PC-3 (cell line): ENCODE measurements at regions of chr12 and their contacts with region 1.

Region 1: DNA sequence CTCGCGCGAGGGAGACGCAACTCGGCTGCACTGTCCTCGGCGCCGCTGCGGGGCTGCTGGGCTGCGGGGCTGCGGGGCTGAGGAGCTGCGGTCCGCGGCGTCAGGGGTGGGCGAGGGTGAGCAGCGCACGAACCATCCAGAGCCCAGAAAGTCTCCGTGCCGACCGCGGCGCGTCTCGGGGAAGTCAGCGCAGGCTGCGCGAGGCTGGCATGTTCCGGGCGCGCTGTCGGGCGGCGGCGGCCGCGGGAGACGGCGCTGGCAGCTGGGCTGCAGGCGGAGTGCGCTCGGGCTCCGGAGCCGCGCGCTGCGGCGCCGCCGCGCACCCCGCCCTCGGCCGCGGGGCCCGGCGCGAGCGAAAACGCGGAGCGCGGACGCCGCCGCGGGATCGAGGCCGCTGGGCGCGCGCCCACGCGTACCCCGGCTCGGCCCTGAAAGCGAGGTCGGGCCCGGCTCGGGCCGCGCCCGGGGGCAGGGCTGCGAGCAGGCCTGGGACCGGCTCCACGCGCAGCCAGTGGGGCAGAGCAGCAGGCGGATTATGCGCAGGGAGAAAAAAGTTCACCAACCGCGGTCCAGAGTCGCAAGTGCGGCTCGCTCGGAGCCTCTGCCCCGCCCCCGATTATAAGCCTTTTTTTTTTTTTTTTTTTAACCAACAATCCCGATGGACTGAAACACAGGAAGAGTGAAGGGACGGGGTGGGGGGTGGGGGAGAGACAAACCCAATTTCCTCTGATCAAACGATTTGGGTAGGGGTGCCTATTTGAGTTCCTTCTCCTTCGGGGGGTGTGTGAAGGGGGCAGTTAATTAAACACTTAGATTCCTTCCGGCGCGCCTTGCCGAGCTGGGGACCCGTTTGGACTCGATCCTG is at the start of gene PRICKLE1:
- DNase-seq: peak; percentile 57
- ATAC-seq: peak; percentile 45
- H3K4me3 ChIP-seq: peak within 1 kb of the TSS; percentile 97
- H3K27ac ChIP-seq: 0 out of 2 replicates have a peak within 1 kb of the TSS, but pooled peaks have one; percentile 5
- H3K4me1 ChIP-seq: peaks cover 45% of the 10 kb centered on the region
- H3K27me3 ChIP-seq: no peaks in the 10 kb centered on the region
- CTCF ChIP-seq: no peak
- total RNA-seq, gene PRICKLE1: 16.2 and 17.2 TPM in 2 replicates

Region 2: DNA sequence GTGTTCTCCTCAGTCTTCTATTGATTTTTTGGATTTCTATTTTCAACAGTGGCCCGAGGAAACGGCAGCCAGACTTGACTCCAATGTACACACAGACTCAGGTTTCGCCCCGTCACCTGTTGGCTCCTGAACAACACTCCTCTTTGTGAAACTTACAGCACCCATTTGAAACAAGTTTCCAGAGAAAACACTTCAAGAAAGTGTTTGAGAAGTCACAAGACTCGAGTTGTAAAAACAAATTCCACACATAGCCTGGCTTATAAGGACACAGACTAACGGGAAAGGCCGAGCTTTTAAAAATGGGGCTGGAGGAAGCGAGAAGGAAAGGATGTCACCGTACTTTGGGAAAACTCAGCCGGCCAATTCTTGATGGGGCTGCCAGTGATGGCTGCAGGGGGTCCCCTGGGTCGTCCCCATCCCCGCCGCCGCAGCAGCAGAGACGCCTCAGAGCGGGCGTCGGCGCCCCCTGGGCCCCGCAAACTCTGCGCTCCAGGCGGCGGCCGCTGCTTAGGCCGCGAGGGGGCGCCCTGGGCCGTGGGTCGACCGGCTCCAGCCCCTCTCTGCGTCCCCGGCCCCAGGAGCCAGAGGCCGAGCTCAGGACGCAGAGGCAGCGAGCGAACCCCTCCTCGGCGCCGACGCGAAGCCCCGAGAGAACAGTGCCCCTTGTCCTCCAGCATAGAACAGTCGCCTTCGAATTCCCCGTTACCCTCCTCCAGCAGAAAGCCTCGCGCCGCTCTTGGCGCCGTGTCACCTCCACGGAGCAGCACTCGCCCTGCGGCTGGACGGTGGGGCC is 107.1 kb before region 1 on chr12:
- CTCF ChIA-PET with region 1: no interaction called
- POLR2A ChIA-PET with region 1: no interaction called
- intact Hi-C with region 1: loop called (anchors 5 kb)
- DNase-seq: peak; percentile 73
- ATAC-seq: peak; percentile 82
- H3K4me3 ChIP-seq: peak overlapping the region; percentile 78
- H3K27ac ChIP-seq: peak overlapping the region; percentile 54
- H3K4me1 ChIP-seq: peaks cover 18% of the 10 kb centered on the region; the same call in 1 of the 2 replicates
- H3K27me3 ChIP-seq: no peaks in the 10 kb centered on the region
- CTCF ChIP-seq: peak; percentile 94

Region 3: DNA sequence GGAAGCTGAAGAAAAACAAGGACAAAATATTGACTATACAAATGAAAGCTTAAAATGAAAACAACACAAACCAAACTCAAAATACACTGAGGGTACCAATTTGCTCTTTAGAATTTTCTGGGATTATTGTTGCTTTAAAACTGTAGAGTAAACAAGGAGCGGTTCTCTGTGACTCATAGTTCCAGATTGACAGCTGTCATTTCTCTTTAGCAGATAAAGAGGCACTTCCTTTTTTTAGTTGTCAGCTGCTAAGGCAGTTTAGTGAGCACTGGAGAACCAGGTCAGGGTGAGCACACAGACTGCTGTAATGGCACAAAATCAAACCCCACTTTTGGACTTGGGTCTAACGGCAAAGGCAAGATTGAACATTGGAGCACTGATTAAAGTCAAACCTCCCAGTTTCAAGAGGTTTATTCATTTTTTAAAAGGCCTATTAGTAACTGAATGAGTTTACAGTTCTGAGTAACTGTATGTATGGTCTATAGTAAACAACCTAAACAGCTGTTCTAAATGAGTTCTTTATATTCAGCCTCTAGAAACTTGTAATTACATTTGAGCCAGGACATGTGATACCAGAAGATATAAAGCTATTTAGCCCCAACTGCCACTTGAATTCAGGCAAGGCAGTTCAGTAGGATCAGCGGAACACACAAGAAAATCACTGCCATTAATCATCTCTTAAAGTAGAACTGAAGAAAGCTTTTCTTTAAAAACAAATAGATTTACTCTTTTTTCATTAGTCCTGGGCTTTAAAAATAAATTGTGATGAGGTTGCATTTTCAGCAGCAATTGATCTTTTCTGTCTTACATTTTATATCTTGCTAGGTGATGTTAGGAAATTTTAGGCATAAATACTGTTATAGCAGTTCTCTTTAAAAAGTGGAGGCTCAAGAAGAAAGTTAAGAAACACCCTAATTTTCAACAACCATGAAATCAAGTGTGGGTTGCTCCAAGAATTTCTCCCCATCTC is 71.6 kb after region 1 on chr12:
- CTCF ChIA-PET with region 1: no interaction called
- POLR2A ChIA-PET with region 1: no interaction called
- intact Hi-C with region 1: loop called (anchors 5 kb)
- DNase-seq: peak; percentile 24
- ATAC-seq: peak; percentile 66
- H3K4me3 ChIP-seq: no peak overlapping the region
- H3K27ac ChIP-seq: no peak overlapping the region
- H3K4me1 ChIP-seq: peaks cover 8% of the 10 kb centered on the region
- H3K27me3 ChIP-seq: no peaks in the 10 kb centered on the region
- CTCF ChIP-seq: no peak

Region 4: DNA sequence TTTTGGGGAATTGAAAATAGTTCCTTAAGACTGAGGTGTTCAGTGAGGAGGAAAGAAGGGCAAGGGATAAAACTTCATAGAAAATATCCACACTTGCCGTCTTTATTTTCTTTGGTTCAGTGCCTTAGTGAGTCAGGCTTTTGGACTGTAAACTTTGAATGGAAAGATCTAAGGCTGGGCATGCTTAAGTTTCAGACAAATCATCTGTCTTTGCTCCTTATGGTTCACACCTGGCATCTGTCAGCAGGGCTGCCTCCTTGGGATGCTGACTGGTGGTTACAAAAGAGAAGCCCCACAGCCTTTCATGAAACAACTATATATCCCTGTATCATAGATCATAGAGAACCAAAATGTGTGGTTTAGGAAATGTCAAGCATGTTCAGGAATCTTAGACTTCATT is 136.1 kb after region 1 on chr12:
- CTCF ChIA-PET with region 1: no interaction called
- POLR2A ChIA-PET with region 1: no interaction called
- intact Hi-C with region 1: loop called (anchors 5 kb)
- DNase-seq: peak; percentile 80
- ATAC-seq: peak; percentile 66
- H3K4me3 ChIP-seq: no peak overlapping the region
- H3K27ac ChIP-seq: no peak overlapping the region
- H3K4me1 ChIP-seq: peaks cover 41% of the 10 kb centered on the region
- H3K27me3 ChIP-seq: no peaks in the 10 kb centered on the region
- CTCF ChIP-seq: no peak

Region 5: GRCh38 chr12:42887657-42888056 is 298.0 kb after region 1 on chr12:
- CTCF ChIA-PET with region 1: no interaction called
- POLR2A ChIA-PET with region 1: no interaction called
- intact Hi-C with region 1: loop called (anchors 5 kb)
- DNase-seq: peak; percentile 68
- ATAC-seq: peak; percentile 90
- H3K4me3 ChIP-seq: no peak overlapping the region
- H3K27ac ChIP-seq: peak overlapping the region; percentile 57
- H3K4me1 ChIP-seq: peaks cover 15% of the 10 kb centered on the region
- H3K27me3 ChIP-seq: no peaks in the 10 kb centered on the region
- CTCF ChIP-seq: no peak

Region 6: DNA sequence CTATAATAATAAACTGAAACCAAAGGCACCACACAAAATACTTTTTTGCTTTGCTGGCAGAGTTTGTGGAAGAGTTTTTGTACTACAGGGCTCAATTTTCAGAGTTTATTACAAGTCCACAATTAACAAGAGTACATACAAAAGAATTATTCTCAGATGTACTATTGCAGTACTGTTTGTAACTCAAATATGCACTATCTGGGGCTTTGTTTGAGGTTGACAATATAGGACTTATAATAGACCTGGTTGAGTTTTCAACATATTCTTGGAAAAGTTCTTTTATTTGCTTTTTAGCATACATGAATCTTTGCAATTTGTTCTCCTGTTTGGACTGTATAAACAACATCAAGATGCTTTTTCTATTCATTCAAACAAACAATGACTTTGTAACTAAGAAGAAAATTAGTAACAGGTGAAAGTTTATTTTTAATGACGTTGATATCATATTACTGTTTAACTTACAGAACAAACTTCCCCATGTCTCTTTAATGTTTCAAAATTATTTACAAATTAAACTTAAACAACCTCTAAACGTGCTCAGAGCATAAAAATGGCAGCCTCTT is 407.3 kb after region 1 on chr12:
- CTCF ChIA-PET with region 1: no interaction called
- POLR2A ChIA-PET with region 1: no interaction called
- intact Hi-C with region 1: loop called (anchors 1 kb)
- DNase-seq: peak; percentile 31
- ATAC-seq: peak; percentile 73
- H3K4me3 ChIP-seq: no peak overlapping the region
- H3K27ac ChIP-seq: peak overlapping the region; percentile 37
- H3K4me1 ChIP-seq: peaks cover 17% of the 10 kb centered on the region
- H3K27me3 ChIP-seq: no peaks in the 10 kb centered on the region
- CTCF ChIP-seq: no peak

Region 7: DNA sequence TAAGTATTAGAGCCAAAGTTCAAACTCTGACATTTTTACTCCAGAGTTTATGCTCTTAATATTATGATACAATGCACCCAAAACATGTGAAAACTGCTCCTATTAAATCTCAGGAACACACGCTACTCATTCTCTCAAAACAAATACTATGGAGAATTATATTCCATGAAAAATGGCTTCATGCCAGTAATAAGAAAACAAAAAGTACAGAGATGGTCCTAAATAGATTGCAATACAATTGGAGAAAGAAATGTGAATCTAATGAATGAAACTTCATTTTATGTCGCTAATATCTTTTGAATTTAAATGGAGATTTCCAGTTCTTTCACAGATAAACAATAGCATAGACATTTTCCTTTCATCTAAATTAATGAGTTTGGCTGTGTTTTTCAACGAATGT is 578.0 kb after region 1 on chr12:
- CTCF ChIA-PET with region 1: no interaction called
- POLR2A ChIA-PET with region 1: no interaction called
- intact Hi-C with region 1: loop called (anchors 5 kb)
- DNase-seq: no peak
- ATAC-seq: no peak
- H3K4me3 ChIP-seq: no peak overlapping the region
- H3K27ac ChIP-seq: no peak overlapping the region
- H3K4me1 ChIP-seq: peaks cover 10% of the 10 kb centered on the region; the same call in 1 of the 2 replicates
- H3K27me3 ChIP-seq: no peaks in the 10 kb centered on the region
- CTCF ChIP-seq: no peak